Ascending aorta (tissue), 2 donors: ENCODE measurements at regions of chr2 and their contacts with region 1.

Region 1: DNA sequence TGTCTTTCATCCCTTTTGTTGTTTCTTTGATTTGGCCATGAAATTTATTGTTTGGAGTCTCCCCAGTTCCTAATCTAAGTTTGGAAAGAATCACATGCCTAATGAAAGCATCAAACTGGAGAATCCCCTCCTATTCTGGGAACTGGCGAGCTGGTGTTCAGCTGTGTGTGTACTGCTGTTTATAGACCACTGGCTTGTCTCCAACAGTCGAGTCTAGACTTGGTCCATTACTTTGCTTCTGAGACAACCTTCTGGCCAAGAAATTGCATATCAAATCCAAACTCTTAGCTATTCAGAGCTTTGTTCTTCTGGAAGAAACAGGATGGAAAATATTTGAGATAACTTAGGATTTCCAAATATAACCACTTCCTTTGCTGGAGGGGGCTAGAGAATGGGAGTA is 111.5 kb upstream of the THSD7B start:
- DNase-seq: peak in 1 of 2 donors; percentile 87
- H3K4me3 ChIP-seq: no peak overlapping the region
- H3K27ac ChIP-seq: peak overlapping the region; percentile 82 to 85
- H3K4me1 ChIP-seq: peaks cover 7 to 25% of the 10 kb centered on the region in 2 donors
- H3K27me3 ChIP-seq: no peaks in the 10 kb centered on the region
- CTCF ChIP-seq: no peak

Region 2: DNA sequence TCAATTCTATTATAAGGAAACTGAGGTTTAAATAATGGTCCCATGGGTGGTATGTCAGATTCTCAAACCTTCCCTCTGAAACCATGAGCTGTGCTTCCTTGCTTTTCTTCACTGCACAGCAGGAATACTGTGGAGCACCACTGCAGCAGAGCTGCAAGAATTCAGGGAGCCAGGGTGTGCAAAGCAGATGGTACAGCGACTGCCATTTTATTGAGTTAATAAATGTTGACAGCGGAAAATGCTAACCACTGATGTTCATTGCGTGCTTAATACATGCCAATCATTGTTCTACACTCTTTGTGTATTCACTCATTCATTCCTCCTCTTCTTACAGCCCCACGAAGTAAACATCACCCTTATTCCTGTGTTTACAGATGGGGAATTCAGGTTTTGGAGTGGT is 40.8 kb before region 1 on chr2:
- intact Hi-C with region 1: no loop called
- DNase-seq: no peak
- H3K4me3 ChIP-seq: no peak overlapping the region
- H3K27ac ChIP-seq: no peak overlapping the region
- H3K4me1 ChIP-seq: peaks cover 0 to 4% of the 10 kb centered on the region in 2 donors
- H3K27me3 ChIP-seq: no peaks in the 10 kb centered on the region
- CTCF ChIP-seq: no peak

Region 3: DNA sequence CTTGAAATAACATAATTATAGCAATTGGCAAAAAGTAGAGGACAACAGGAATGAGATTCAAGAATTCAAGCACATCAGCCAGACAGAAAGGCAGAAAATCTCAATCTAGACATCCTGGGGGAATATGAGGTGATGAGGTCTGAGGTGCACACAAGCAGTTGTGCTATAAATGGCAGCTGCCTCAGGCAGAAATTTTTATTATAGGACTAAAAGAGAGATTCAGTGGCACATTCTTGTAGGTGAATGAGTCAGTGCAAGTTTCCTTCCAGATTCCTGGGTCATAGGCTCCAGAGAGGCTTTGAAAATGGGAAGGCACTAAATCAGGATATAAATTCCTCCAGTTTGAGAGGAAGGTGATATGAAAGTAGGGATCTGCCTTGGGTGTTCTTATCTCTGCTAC is 15.7 kb before region 1 on chr2:
- intact Hi-C with region 1: loop called (anchors 2 kb)
- DNase-seq: no peak
- H3K4me3 ChIP-seq: no peak overlapping the region
- H3K27ac ChIP-seq: peak overlapping the region; percentile 57 to 69
- H3K4me1 ChIP-seq: peaks cover 0 to 15% of the 10 kb centered on the region in 2 donors
- H3K27me3 ChIP-seq: no peaks in the 10 kb centered on the region
- CTCF ChIP-seq: no peak

Region 4: DNA sequence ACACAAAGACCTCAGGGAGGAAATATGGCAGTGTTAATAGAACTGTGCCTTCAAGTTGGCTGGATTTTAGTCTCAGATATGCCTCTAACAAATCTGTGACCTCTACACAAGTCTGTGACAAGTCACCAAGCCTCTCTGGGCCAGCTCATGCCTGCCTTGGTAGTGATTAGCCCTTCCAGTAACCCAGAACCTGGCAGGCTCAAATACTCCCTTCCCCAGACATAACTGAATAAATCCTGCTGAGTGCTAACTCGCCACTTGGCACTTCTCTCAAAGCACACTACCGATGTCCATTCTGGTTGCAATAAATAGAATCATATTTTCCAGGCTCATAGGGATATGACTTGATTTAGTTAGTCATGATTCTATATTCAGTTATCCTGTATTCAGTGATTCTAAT is 96.2 kb after region 1 on chr2:
- intact Hi-C with region 1: no loop called
- DNase-seq: no peak
- H3K4me3 ChIP-seq: no peak overlapping the region
- H3K27ac ChIP-seq: no peak overlapping the region
- H3K4me1 ChIP-seq: peaks cover 0 to 4% of the 10 kb centered on the region in 2 donors
- H3K27me3 ChIP-seq: no peaks in the 10 kb centered on the region
- CTCF ChIP-seq: no peak

Region 5: DNA sequence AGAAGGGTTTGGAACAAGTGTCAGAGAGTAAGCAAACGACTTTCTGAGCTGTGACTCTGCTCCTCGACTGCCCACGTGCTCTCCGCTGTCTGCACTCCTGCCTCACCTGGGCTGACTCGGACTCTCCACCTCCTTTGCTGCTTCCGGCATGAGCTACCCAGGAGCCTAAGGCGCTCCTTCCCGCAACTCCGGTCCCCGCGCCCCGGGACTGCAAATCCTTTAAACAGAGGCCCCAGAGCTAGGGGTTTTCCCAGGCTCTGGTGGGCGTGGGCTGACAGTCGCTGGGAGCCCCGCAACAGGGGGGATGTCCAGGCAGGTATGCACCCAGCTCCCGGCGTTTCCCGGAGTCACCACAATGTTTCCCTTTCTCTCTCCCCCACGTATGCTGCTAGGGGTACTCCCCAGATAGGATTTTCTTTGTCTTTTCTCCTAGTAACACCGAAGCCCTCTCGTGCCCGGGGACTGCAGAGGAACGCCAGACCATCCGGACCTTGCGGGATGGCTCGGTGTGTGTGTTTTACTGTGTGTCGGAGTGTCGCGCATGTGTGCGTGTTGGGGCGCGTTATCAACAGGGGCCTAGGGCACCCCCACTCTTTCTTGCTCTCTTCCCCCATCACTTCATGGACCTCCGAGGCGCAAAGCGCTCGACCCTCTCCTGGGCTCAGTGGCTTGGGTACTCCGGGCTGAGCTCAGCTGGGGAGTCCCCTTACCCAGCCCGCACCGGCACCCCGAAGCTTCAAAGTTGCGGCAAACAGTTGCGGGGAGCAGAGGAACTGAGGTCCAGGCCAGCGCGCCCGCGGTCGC is 110.8 kb after region 1 on chr2:
- intact Hi-C with region 1: loop called (anchors 5 kb)
- DNase-seq: no peak
- H3K4me3 ChIP-seq: peak overlapping the region; percentile 63 to 95
- H3K27ac ChIP-seq: peak overlapping the region; percentile 1 to 42
- H3K4me1 ChIP-seq: peaks cover 0 to 4% of the 10 kb centered on the region in 2 donors
- H3K27me3 ChIP-seq: no peaks in the 10 kb centered on the region
- CTCF ChIP-seq: no peak

Region 6: GRCh38 chr2:136863874-136864273 is 210.0 kb after region 1 on chr2:
- intact Hi-C with region 1: loop called (anchors 5 kb)
- DNase-seq: no peak
- H3K4me3 ChIP-seq: peak overlapping the region; percentile 33 to 47
- H3K27ac ChIP-seq: peak overlapping the region; percentile 56 to 68
- H3K4me1 ChIP-seq: no peaks in the 10 kb centered on the region
- H3K27me3 ChIP-seq: no peaks in the 10 kb centered on the region
- CTCF ChIP-seq: no peak